ENCODE measurements at regions of chr5 and their contacts with region 1.

Region 1: GRCh38 chr5:138352071-138352721 is at the start of gene KDM3B:
- DNase-seq: peak; percentile 76
- ATAC-seq: peak; percentile 63
- H3K4me3 ChIP-seq: peak within 1 kb of the TSS; percentile 93 to 98 (median 97)
- H3K27ac ChIP-seq: peak within 1 kb of the TSS; percentile 86
- H3K4me1 ChIP-seq: peaks cover 20% of the 10 kb centered on the region
- H3K27me3 ChIP-seq: no peaks in the 10 kb centered on the region; a peak in 1 of 5 replicates
- CTCF ChIP-seq: peak; percentile 90
- EP300 ChIP-seq: peak; percentile 35 to 37; a peak in 1 of 4 replicates
- POLR2A ChIP-seq: no peak
- RAD21 ChIP-seq: peak; percentile 65; the same call in 1 of the 2 replicates
- total RNA-seq, gene KDM3B: 34.3 and 47.7 TPM in 2 replicates

Region 2: DNA sequence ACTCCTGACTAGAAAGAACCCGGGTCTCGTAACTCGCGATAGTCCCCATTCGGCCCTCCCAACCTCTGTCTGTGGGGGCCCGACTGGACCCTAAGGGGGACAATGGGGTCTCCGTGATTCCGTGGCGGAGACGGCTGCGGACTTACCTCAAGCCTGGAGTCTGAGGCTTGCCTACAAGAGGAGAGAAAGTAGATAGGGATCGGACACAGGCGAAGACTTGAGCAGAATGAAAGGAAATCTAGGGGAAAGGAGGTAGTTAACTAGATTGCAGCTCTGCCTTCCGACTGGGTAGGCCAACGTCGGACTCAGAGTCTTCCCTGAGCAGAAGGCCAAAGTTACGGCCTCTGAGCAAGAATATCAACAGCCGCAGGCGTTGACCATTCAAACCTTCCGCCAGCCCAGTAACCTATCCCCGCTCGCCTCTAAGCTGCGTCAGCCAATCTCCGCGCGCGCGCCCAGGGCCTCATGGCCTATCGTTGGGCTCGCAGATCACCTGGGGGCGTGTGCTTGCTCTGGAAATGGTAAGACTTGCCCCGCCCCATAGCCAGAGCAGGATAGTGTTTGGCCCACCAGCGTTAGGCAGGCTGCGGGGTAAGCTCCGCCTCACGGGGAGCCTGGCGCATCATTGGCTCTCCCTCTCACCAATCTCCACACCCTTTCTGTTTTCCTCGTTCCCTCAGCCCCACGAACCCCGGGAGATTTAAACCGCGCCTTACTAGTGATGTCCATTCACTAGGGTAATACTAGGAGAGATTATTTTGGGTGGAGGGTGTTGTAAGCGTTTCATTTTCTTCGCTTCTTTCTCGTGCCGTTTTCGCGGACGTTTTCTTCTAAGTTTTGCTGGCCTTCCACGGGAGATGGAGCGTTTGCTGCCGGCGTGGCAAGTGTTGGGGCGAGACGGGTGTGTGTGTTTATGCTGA is 20.5 kb before region 1 on chr5 and contains the start of gene CDC25C:
- CTCF ChIA-PET with region 1: interaction called, 3 read pairs
- POLR2A ChIA-PET with region 1: interaction called, 15 read pairs
- in situ Hi-C with region 1: no loop called
- intact Hi-C with region 1: no loop called
- DNase-seq: peak; percentile 98
- ATAC-seq: peak; percentile 99
- H3K4me3 ChIP-seq: peak within 1 kb of the TSS; percentile 80 to 88 (median 85)
- H3K27ac ChIP-seq: peak within 1 kb of the TSS; percentile 83
- H3K4me1 ChIP-seq: peaks cover 45% of the 10 kb centered on the region
- H3K27me3 ChIP-seq: no peaks in the 10 kb centered on the region; a peak in 1 of 5 replicates
- CTCF ChIP-seq: no peak
- EP300 ChIP-seq: no peak
- POLR2A ChIP-seq: peak; percentile 79 to 98
- RAD21 ChIP-seq: no peak
- total RNA-seq, gene CDC25C: 27.6 and 44.1 TPM in 2 replicates

Region 3: DNA sequence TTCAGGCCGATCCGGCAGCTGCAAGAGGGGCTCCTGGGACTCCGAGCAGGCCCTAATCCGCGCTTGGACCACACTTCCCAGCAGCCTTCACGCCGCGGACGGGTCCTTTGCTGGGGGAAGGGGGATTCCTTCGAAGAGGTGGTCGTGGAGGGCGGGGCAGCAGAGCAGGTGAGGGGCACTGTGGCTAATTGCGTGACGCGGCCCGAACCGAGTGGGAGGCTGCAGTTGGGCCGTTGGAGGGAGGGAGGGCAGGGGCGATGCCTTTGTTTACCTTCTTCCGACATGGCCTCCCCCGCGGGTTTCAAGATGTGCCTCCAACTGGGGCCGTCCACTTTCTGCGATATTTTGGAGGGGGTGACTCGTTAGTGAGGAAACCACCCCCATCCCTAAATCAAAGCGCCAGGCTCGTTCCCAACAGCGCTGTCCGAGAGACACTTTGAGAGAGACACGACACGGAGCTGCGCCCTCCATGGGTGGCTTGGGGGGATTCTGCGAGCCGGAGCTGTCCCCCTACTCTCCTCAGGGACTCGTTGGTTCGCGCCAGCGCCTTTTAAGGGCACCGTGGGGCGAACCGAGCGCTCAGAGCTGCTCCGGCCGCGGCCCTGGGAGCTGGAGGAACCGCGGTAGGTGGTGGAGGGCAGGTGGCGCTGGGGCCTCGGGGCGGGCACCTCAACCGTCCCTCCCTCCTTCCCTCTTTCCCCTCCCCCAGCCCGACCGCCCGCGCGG is 14.3 kb before region 1 on chr5 and contains the start of gene FAM53C:
- CTCF ChIA-PET with region 1: interaction called, 14 read pairs
- POLR2A ChIA-PET with region 1: interaction called, 111 read pairs
- in situ Hi-C with region 1: no loop called
- intact Hi-C with region 1: loop called (anchors 2 kb)
- DNase-seq: peak; percentile 83
- ATAC-seq: peak; percentile 93
- H3K4me3 ChIP-seq: peak within 1 kb of the TSS; percentile 73 to 80 (median 78)
- H3K27ac ChIP-seq: peak within 1 kb of the TSS; percentile 99
- H3K4me1 ChIP-seq: peaks cover 51% of the 10 kb centered on the region
- H3K27me3 ChIP-seq: no peaks in the 10 kb centered on the region; a peak in 1 of 5 replicates
- CTCF ChIP-seq: peak; percentile 36
- EP300 ChIP-seq: peak in 1 of 2 experiments; percentile 40; a peak in 2 of 4 replicates
- POLR2A ChIP-seq: peak; percentile 100
- RAD21 ChIP-seq: peak; percentile 62
- total RNA-seq, gene FAM53C: 26.9 and 28.5 TPM in 2 replicates

Region 4: GRCh38 chr5:138369706-138370105 is 17.5 kb after region 1 on chr5:
- CTCF ChIA-PET with region 1: no interaction called
- POLR2A ChIA-PET with region 1: interaction called, 3 read pairs
- in situ Hi-C with region 1: no loop called
- intact Hi-C with region 1: loop called (anchors 1 kb)
- DNase-seq: no peak
- ATAC-seq: no peak
- H3K4me3 ChIP-seq: no peak overlapping the region
- H3K27ac ChIP-seq: no peak overlapping the region
- H3K4me1 ChIP-seq: peaks cover 22% of the 10 kb centered on the region
- H3K27me3 ChIP-seq: no peaks in the 10 kb centered on the region
- CTCF ChIP-seq: no peak
- EP300 ChIP-seq: no peak
- POLR2A ChIP-seq: no peak
- RAD21 ChIP-seq: no peak

Measured in HepG2 (cell line).